Activated CD4-positive, alpha-beta memory T cell treated with anti-CD3 and anti-CD28 coated beads for 36 hours (primary cell): ENCODE measurements at regions of chr6 and their contacts with region 1.

Region 1: DNA sequence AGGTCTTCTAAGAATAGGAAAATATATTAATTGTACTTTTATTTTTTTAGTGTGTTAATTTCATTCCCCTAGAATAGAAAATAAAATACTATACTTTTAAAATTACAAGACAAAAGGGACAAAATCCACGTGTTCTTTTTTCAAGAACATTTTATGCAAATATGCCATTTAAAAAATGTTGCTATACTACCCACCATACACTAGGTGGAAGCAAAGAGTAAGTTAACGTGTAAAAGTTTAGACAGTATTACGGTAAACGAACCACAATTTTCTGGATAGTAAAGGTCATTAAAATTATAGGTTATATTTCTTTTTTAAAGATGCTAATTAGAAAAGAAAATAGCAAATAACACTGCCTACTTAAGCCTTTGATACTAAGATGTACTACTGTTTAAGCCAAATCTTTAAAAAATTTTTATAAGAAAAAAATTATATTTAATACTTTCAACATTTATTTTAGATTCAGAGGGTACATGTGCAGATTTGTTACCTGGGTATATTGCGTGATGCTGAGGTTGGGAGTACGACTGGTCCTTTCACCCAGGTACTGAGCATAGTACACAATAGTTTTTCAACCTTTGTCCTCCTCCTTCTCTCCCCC is 287.6 kb downstream of the PHF3 start:
- DNase-seq: no peak
- H3K4me3 Mint-ChIP-seq: no peak overlapping the region
- H3K27ac Mint-ChIP-seq: no peak overlapping the region
- H3K4me1 Mint-ChIP-seq: no peaks in the 10 kb centered on the region
- H3K27me3 Mint-ChIP-seq: no peaks in the 10 kb centered on the region

Region 2: DNA sequence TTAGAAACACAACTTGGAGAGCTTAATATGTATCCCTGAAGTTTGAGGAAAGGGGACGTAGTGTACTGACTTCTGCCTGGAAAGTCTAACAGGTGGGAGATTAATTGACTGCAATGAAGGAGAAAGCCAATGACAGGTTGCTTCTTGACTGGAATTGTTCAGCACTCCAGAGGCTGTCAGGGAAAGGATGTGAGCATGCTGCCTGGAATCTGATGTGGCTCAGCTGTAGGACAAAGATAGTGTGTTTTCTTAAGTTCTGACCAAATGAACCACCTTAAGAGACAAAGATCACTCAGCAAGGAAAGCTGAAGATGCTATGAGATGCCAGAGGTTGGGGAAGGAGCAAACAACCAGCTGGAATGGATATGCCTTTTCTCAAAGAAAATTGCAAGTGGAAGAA is 101.8 kb before region 1 on chr6:
- CTCF ChIA-PET with region 1: no interaction called
- POLR2A ChIA-PET with region 1: no interaction called
- intact Hi-C with region 1: no loop called
- DNase-seq: no peak
- H3K4me3 Mint-ChIP-seq: no peak overlapping the region
- H3K27ac Mint-ChIP-seq: no peak overlapping the region
- H3K4me1 Mint-ChIP-seq: no peaks in the 10 kb centered on the region
- H3K27me3 Mint-ChIP-seq: peaks cover 11% of the 10 kb centered on the region

Region 3: GRCh38 chr6:63936399-63936798 is 13.2 kb after region 1 on chr6:
- CTCF ChIA-PET with region 1: no interaction called
- POLR2A ChIA-PET with region 1: no interaction called
- intact Hi-C with region 1: no loop called
- DNase-seq: no peak
- H3K4me3 Mint-ChIP-seq: no peak overlapping the region
- H3K27ac Mint-ChIP-seq: no peak overlapping the region
- H3K4me1 Mint-ChIP-seq: no peaks in the 10 kb centered on the region
- H3K27me3 Mint-ChIP-seq: peaks cover 2% of the 10 kb centered on the region

Region 4: DNA sequence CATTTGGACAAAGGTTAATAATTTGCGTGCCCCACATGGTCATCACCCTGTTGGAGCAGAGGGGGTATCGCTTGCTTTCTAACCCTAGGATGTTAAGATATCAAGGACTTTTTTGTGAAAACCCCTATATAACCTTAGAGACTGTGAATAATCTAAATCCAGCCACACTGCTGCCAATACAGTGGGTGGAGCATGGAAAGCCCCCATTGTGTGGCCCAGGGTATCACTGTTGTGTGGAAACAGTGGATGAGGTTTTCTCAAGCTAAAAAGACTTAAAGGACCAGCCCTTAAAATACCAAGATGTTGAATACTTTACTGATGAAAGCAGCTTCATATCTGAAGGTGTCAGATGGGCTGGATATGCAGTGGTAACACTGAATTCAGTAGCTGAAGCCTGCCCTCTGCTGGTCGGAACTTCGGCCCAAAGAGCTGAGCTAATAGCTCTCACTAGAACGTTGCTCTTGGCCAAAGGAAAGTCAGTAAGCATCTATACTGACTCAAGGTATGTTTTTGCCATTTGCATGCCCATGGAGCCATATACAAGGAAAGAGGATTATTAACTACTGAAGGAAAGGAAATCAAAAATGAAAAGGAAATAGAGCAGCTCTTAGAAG is 407.6 kb after region 1 on chr6:
- CTCF ChIA-PET with region 1: interaction called, 3 read pairs
- POLR2A ChIA-PET with region 1: no interaction called
- intact Hi-C with region 1: loop called (anchors 2 kb)
- DNase-seq: peak; percentile 54
- H3K4me3 Mint-ChIP-seq: no peak overlapping the region
- H3K27ac Mint-ChIP-seq: no peak overlapping the region
- H3K4me1 Mint-ChIP-seq: no peaks in the 10 kb centered on the region
- H3K27me3 Mint-ChIP-seq: no peaks in the 10 kb centered on the region